Sigmoid colon (tissue), 7 donors: ENCODE measurements at regions of chr21 and their contacts with region 1.

Region 1: DNA sequence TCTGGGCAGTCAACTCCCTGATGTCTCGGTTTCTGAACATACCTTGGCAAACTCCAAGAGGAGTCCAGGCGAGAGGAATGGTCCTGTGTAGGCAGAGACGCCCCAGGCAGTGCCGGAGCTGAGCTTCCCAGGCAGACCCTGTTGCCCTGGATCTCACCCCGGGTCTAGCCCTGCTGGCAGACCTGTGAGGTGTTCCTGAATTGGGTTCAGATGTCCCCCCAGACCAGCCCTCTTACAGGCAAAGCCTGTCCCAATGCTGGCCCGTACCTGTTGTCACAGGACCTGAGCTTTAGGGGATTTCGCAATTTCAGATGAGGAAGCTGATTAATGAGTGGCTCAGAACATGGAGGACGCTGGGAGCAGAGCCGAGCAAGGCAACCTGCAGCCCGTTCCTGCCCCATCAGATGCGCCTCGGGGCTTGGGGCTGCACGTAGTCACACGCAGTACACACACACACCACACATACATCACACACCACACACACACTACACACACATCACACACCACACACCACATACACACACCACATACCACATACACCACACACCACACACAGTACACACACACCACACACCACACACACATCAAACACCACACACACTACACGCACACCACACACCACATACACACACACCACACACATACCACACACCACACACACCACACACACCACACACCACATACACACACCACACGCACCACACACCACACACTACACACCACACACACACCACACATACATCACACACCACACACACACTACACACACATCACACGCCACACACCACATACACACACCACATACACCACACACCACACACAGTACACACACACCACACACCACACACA is 38.4 kb upstream of the PDE9A start:
- DNase-seq: no peak
- H3K4me3 ChIP-seq: no peak overlapping the region
- H3K27ac ChIP-seq: no peak overlapping the region
- H3K4me1 ChIP-seq: peaks cover 0 to 10% (median 3%) of the 10 kb centered on the region in 4 donors
- H3K27me3 ChIP-seq: peaks cover 0 to 39% (median 23%) of the 10 kb centered on the region in 3 donors
- CTCF ChIP-seq: no peak
- EP300 ChIP-seq: no peak
- POLR2A ChIP-seq: no peak

Region 2: GRCh38 chr21:42561762-42562650 is 53.0 kb before region 1 on chr21:
- intact Hi-C with region 1: loop called (anchors 10 kb)
- DNase-seq: peak; percentile 29
- H3K4me3 ChIP-seq: no peak overlapping the region
- H3K27ac ChIP-seq: no peak overlapping the region
- H3K4me1 ChIP-seq: no peaks in the 10 kb centered on the region
- H3K27me3 ChIP-seq: no peaks in the 10 kb centered on the region
- CTCF ChIP-seq: no peak
- EP300 ChIP-seq: no peak
- POLR2A ChIP-seq: no peak